CD4-positive, alpha-beta T cell (primary cell): ENCODE measurements at regions of chr6 and their contacts with region 1.

Region 1: GRCh38 chr6:132530293-132530974 is 7.6 kb upstream of the TAAR9 start:
- DNase-seq: peak; percentile 13 to 83 (median 58)
- ATAC-seq: peak; percentile 73
- H3K4me3 ChIP-seq: no peak overlapping the region
- H3K4me3 Mint-ChIP-seq: no peak overlapping the region
- H3K27ac ChIP-seq: no peak overlapping the region
- H3K27ac Mint-ChIP-seq: no peak overlapping the region
- H3K4me1 ChIP-seq: no peaks in the 10 kb centered on the region
- H3K4me1 Mint-ChIP-seq: no peaks in the 10 kb centered on the region
- H3K27me3 ChIP-seq: peaks cover 0 to 2% of the 10 kb centered on the region in 2 experiments
- H3K27me3 Mint-ChIP-seq: peaks cover 21% of the 10 kb centered on the region
- CTCF ChIP-seq: peak; percentile 92

Region 2: GRCh38 chr6:132512638-132513632 is 17.5 kb before region 1 on chr6 and contains the start of gene STX7:
- CTCF ChIA-PET with region 1: interaction called, 13 read pairs
- POLR2A ChIA-PET with region 1: no interaction called
- intact Hi-C with region 1: no loop called
- DNase-seq: peak; percentile 70 to 92 (median 82)
- ATAC-seq: peak; percentile 93
- H3K4me3 ChIP-seq: peak within 1 kb of the TSS; percentile 76
- H3K4me3 Mint-ChIP-seq: peak within 1 kb of the TSS; percentile 99
- H3K27ac ChIP-seq: peak within 1 kb of the TSS in 1 of 2 donors; percentile 39
- H3K27ac Mint-ChIP-seq: peak within 1 kb of the TSS; percentile 86
- H3K4me1 ChIP-seq: peaks cover 3% of the 10 kb centered on the region
- H3K4me1 Mint-ChIP-seq: peaks cover 42% of the 10 kb centered on the region
- H3K27me3 ChIP-seq: no peaks in the 10 kb centered on the region
- H3K27me3 Mint-ChIP-seq: peaks cover 2% of the 10 kb centered on the region
- CTCF ChIP-seq: no peak
- total RNA-seq, gene STX7: 4.3 to 5.9 TPM

Region 3: DNA sequence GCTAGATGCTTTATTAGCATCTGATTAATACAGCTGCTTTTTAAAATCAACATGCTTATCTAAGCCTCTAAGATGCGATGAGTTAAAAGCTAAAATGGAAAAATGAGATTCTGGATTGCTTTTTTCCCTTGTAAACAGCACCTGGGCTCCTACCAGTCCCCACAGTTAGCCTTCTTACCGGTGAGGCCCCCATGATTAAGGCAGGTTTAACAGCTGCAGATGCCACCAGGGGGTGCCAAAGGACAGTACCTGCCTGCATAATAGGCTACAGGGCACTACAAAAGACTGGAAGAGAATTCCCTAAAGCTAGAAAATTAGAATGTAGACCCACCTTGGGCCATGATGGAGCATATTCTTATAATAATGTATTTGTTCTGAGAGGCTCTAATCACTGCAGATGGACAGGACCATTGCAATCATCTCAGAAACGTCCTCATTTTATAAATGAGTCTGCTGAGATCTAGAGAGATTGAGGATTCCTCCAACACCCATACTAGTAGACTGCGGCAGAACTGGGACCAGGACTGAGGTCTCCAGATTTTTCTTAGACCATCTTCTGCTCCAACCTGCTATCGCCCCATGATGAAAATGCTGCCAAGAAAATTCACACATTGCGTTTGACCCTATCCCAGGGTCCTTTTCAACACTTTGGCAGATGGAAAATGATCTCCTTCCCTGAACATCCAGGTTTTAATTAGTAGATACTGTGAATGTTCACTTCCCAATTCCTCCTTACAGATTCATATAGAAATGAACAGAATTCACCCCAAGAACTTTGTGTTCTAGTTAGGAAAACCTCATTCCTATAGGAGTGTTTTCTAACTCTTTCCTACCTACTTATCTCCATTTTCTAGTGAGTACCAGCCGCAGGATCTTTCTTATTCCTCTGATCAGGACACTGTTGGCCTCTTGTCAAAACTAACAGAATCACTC is 432.8 kb after region 1 on chr6:
- CTCF ChIA-PET with region 1: no interaction called
- POLR2A ChIA-PET with region 1: no interaction called
- intact Hi-C with region 1: loop called in 1 of 2 experiments (anchors 5 kb)
- DNase-seq: peak; percentile 9 to 53 (median 34)
- ATAC-seq: peak; percentile 56
- H3K4me3 ChIP-seq: no peak overlapping the region
- H3K4me3 Mint-ChIP-seq: no peak overlapping the region
- H3K27ac ChIP-seq: no peak overlapping the region
- H3K27ac Mint-ChIP-seq: no peak overlapping the region
- H3K4me1 ChIP-seq: no peaks in the 10 kb centered on the region
- H3K4me1 Mint-ChIP-seq: no peaks in the 10 kb centered on the region
- H3K27me3 ChIP-seq: no peaks in the 10 kb centered on the region
- H3K27me3 Mint-ChIP-seq: peaks cover 38% of the 10 kb centered on the region
- CTCF ChIP-seq: peak; percentile 81

Region 4: DNA sequence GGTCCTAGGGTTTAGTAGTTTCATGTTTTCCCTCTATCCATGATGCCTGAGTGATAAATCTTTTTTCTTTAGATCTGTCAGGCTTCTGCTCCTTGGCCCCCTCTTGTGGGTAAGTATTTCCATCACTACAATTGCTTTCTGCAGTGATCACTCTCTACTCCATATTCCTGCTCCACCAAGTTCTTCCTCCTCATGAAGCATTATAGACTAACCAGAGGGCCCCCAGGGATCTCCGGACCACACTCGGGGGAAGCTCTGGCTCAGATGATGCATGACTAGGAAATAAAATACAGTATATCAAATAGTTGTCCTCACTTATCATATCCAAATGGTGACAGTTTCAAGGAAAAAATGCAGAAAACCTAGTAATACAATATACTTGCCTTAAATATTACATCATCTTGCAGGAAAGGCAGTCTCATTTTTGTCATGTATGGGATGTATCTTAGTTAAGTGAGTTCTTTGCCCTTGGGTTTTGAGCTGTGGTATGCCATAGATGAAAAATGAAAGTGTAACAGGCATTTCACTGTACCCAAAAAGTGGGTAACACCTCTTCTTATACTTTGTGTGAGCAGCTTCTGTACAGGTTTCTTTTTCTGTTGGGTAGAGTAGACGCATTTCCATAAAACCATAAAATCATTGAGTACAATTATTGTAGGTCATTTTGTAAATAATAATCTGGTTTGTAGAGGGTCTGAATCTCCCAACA is 509.8 kb after region 1 on chr6:
- CTCF ChIA-PET with region 1: no interaction called
- POLR2A ChIA-PET with region 1: no interaction called
- intact Hi-C with region 1: loop called (anchors 5 kb)
- DNase-seq: peak in 2 of 14 experiments; percentile 4 to 9
- ATAC-seq: no peak
- H3K4me3 ChIP-seq: no peak overlapping the region
- H3K4me3 Mint-ChIP-seq: no peak overlapping the region
- H3K27ac ChIP-seq: no peak overlapping the region
- H3K27ac Mint-ChIP-seq: no peak overlapping the region
- H3K4me1 ChIP-seq: no peaks in the 10 kb centered on the region
- H3K4me1 Mint-ChIP-seq: no peaks in the 10 kb centered on the region
- H3K27me3 ChIP-seq: peaks cover 0 to 2% of the 10 kb centered on the region in 2 experiments
- H3K27me3 Mint-ChIP-seq: peaks cover 4% of the 10 kb centered on the region
- CTCF ChIP-seq: no peak

Region 5: DNA sequence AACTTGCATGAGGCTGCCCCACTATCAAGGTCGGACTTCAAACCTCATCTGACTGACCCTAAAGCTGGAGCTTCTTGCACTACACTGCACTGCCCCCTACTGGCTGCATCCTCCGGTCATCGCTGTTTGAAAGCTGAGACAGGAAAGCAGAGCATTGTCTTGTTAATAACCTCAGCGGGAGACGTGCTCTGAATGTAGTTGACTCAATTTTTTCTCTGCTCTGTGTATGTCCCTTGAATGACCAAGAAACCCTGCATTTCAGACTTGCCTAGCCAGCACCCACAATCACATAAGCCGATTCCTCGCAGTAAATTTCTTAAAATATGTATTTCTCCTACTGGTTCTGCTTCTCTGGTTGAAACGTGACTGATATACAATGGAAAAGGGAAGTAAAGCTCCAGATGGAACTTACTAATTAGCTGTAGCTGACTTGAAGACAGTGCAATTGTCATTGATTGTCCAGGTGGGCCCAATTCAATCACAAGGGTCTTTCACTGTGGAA is 1386.3 kb after region 1 on chr6:
- CTCF ChIA-PET with region 1: interaction called, 4 read pairs
- POLR2A ChIA-PET with region 1: no interaction called
- intact Hi-C with region 1: loop called (anchors 5 kb)
- DNase-seq: peak; percentile 43 to 80 (median 62)
- ATAC-seq: peak; percentile 60
- H3K4me3 ChIP-seq: no peak overlapping the region
- H3K4me3 Mint-ChIP-seq: no peak overlapping the region
- H3K27ac ChIP-seq: no peak overlapping the region
- H3K27ac Mint-ChIP-seq: no peak overlapping the region
- H3K4me1 ChIP-seq: peaks cover 4% of the 10 kb centered on the region
- H3K4me1 Mint-ChIP-seq: no peaks in the 10 kb centered on the region
- H3K27me3 ChIP-seq: peaks cover 0 to 22% of the 10 kb centered on the region in 2 experiments
- H3K27me3 Mint-ChIP-seq: peaks cover 44% of the 10 kb centered on the region
- CTCF ChIP-seq: peak; percentile 89

Region 6: GRCh38 chr6:134097114-134097707 is 1566.8 kb after region 1 on chr6:
- CTCF ChIA-PET with region 1: interaction called, 3 read pairs
- POLR2A ChIA-PET with region 1: no interaction called
- intact Hi-C with region 1: loop called (anchors 2 to 10 kb)
- DNase-seq: peak; percentile 27 to 81 (median 54)
- ATAC-seq: peak; percentile 52
- H3K4me3 ChIP-seq: no peak overlapping the region
- H3K4me3 Mint-ChIP-seq: no peak overlapping the region
- H3K27ac ChIP-seq: no peak overlapping the region
- H3K27ac Mint-ChIP-seq: no peak overlapping the region
- H3K4me1 ChIP-seq: no peaks in the 10 kb centered on the region
- H3K4me1 Mint-ChIP-seq: no peaks in the 10 kb centered on the region
- H3K27me3 ChIP-seq: peaks cover 0 to 10% of the 10 kb centered on the region in 2 experiments
- H3K27me3 Mint-ChIP-seq: peaks cover 28% of the 10 kb centered on the region
- CTCF ChIP-seq: peak; percentile 89